Caco-2 (cell line): ENCODE measurements at regions of chr11 and their contacts with region 1.

Region 1: DNA sequence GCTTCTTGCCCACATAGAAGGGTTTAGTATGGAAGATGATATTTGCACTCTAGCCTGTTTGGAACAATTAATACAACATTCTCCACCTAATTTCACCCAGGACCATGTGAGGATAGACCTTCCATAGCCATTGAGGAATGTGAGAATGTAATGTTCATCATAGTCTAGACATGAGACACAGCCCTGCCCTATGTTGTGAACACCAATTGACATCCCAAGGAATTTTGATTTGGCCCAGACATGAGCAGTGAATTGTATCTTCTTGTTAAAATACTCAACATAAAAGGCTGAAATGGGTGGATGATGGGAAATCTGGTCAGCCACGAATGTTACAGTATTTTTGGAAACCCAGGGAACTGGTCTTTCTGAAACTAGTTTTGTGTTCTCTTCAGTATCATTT is 892.3 kb upstream of the CHORDC1 start:
- DNase-seq: no peak
- H3K4me3 ChIP-seq: no peak overlapping the region
- H3K4me3 Mint-ChIP-seq: no peak overlapping the region
- H3K27ac Mint-ChIP-seq: no peak overlapping the region
- H3K4me1 ChIP-seq: no peaks in the 10 kb centered on the region
- H3K4me1 Mint-ChIP-seq: no peaks in the 10 kb centered on the region
- H3K27me3 ChIP-seq: no peaks in the 10 kb centered on the region
- H3K27me3 Mint-ChIP-seq: no peaks in the 10 kb centered on the region
- CTCF ChIP-seq: no peak

Region 2: DNA sequence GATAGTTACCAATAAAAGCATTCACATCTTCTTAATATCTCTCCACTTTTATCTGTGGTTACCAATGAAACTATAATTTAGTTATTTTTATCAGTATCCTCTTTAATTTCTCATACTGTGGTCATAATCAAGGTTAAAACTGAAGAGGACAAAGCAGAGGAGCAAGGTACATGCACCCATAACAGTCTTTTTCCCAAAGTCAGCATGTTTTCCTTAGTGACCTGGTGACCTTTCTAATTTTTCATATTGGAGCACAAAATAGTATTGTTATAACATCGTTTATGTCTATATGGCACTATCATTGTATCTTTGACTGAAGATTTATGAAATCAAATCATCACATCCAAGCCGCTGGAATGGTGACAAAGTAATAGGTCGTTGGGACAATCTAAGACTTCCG is 840.8 kb before region 1 on chr11:
- CTCF ChIA-PET with region 1: no interaction called
- POLR2A ChIA-PET with region 1: no interaction called
- intact Hi-C with region 1: loop called (anchors 10 kb)
- DNase-seq: no peak
- H3K4me3 ChIP-seq: no peak overlapping the region
- H3K4me3 Mint-ChIP-seq: no peak overlapping the region
- H3K27ac Mint-ChIP-seq: no peak overlapping the region
- H3K4me1 ChIP-seq: no peaks in the 10 kb centered on the region
- H3K4me1 Mint-ChIP-seq: no peaks in the 10 kb centered on the region
- H3K27me3 ChIP-seq: no peaks in the 10 kb centered on the region
- H3K27me3 Mint-ChIP-seq: peaks cover 4% of the 10 kb centered on the region
- CTCF ChIP-seq: no peak

Region 3: GRCh38 chr11:91625495-91625894 is 510.4 kb after region 1 on chr11:
- CTCF ChIA-PET with region 1: no interaction called
- POLR2A ChIA-PET with region 1: no interaction called
- intact Hi-C with region 1: no loop called
- DNase-seq: no peak
- H3K4me3 ChIP-seq: no peak overlapping the region
- H3K4me3 Mint-ChIP-seq: no peak overlapping the region
- H3K27ac Mint-ChIP-seq: no peak overlapping the region
- H3K4me1 ChIP-seq: no peaks in the 10 kb centered on the region
- H3K4me1 Mint-ChIP-seq: peaks cover 6% of the 10 kb centered on the region
- H3K27me3 ChIP-seq: no peaks in the 10 kb centered on the region
- H3K27me3 Mint-ChIP-seq: peaks cover under 1% of the 10 kb centered on the region
- CTCF ChIP-seq: no peak